Right ventricle myocardium superior (tissue), 1 donor: ENCODE measurements at regions of chr5 and their contacts with region 1.

Region 1: DNA sequence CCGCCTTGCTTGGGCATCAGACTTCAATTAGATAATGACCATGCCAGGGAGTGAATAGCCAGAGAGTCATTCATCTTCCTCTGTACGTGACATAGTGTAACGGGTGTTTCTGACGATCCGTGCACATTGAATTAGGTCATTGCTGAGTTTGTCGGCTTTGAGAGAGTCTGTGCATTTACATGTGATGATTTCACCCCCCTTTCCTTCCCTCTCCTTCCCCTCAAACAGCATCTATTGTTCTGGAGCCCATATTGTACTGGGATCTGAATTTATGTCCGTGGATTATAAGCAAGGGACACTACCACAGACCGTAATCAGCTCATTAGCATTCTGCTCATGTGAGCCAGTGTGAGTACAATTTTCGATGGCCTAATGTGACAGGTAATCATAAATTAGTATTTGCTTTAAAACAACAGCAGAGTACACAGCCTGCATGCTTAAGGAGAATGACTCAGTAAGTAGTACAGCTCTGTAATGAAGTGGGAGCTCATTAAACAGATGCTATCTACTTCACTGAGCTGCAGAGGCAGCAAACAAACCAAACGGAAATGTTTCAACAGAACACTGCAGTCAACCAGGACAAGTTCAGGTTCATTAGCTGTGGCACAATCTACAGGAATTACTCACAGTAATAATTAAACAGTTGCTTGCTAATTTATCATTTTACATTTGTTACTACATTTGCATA is 302.1 kb downstream of the CSNK1G3 start:
- DNase-seq: no peak
- ATAC-seq: peak; percentile 58

Region 2: DNA sequence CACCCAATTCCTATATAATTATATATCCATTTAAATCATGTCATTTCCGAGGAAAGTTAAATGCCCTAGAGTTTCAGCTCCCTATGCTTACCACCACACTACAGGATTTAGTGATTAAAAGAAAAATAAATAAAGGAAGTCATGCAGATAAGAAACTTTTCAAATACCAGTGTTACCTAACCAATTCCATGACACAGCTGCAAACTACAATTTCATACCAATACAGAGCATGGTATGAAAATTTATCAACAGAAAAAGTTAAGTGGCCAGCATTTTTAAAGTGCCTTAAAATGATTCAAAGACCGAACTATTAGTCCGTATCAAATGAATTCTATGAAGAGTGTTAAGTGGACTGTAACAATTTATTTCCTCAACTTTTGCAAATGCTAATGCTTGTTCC is 426.8 kb before region 1 on chr5:
- intact Hi-C with region 1: no loop called
- DNase-seq: no peak
- ATAC-seq: no peak

Region 3: DNA sequence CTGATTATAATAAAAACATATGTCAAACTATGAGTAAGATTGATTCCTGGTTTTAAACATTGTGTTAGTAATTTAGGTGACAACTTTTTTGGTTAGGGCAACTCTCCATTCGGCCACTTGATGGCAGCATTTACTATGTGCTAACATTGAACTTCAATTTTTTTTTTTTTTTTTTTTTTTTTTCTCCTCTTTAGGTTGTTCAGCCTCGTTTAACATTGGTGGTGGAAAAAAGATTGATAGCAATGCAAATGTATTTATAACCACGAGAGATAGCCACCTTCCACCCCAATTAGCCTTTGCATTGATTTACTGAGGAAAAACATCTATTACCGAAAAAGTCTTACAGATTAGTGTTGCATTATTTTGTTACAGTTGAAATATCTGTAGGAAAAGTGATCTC is 143.0 kb before region 1 on chr5:
- intact Hi-C with region 1: loop called (anchors 10 kb)
- DNase-seq: no peak
- ATAC-seq: peak; percentile 47

Region 4: DNA sequence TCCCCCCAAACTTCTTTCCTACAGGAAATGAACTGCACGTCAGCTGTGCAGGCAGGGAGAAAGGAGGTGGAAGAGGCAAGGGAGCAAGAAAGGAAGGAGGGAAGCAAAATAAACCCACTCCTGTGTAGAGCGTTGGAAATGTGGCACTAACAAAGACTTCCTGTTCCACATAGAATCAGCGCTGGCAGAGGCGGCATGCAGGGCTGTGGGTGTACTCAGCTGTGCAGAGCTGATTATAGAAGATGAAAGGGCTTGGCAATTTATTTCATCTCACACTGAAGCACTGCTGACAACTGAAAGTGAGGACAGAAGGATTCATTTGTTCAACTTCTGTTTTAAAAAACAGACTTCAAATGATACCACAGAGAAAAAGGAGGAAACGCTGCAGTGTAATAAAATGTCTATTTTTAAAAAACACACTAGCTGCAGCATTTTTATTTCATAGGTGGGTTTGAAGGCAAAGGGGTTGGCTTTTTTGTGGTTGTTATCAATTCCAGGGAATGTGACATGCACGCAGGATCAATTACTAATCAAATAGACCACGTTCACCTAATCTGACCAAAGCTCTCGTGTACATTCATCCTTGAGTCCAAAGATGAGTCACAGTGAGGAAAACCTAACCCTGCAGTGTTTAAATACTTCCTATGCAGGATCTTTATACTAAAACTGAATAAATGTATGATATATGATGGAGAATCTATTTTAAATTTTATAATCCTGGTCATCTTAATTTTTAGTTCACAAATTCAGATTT is 348.9 kb after region 1 on chr5:
- intact Hi-C with region 1: no loop called
- DNase-seq: peak; percentile 62
- ATAC-seq: peak; percentile 92